ENCODE measurements at regions of chr5 and their contacts with region 1.

Region 1: GRCh38 chr5:14399054-14399692 is 182.4 kb upstream of the OTULINL start:
- DNase-seq: no peak
- H3K4me3 ChIP-seq: no peak overlapping the region
- H3K27ac ChIP-seq: no peak overlapping the region
- H3K4me1 ChIP-seq: peaks cover 2% of the 10 kb centered on the region
- H3K27me3 ChIP-seq: no peaks in the 10 kb centered on the region
- CTCF ChIP-seq: peak in 2 of 3 donors; percentile 42 to 59
- EP300 ChIP-seq: no peak
- POLR2A ChIP-seq: no peak

Region 2: DNA sequence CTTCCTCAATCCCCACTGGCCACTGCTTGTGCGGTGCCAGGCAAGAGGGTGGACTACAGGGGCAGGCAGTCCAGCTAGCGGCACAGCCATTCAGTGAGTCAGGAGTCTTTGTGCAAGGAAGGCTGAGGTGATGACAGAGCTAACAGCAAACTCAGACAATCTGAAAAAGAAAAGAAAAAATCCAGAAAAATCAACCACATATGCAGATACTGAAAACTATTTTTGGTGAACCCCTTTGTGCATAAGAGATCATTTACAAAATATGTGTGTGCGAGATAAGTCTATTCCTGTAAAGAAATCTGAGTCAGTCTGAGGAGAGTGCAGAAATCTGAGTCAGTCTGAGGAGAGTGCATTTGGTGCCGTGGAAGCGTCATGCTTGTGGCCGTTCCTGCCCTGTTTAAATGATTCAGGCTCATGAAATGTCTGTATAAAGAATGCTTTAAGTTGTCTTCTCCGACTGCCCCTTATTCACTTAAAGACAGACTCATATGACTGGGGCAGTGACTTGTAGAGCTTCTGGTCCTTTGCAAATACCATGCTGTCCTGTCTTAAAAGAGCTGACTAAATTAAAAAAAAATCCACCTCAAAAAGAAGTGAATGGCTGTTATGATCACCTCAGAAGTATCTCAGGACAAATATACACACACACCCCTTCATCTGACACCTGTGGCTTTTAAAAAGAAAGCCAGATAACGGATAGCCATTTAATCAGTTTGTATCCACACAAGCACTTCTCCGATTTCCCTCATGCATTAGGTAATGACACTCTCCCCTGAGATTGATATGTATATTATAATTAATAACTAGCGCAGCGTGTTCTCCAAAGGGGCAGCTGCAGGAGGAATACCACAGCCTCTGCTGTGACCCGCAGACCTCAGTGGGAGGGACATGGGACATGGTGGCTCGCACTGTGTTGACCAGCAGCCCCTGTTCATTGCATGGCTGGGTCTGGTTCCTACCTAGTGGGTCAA is 208.7 kb before region 1 on chr5:
- intact Hi-C with region 1: no loop called
- DNase-seq: no peak
- H3K4me3 ChIP-seq: no peak overlapping the region
- H3K27ac ChIP-seq: peak overlapping the region in 1 of 2 donors; percentile 22
- H3K4me1 ChIP-seq: peaks cover 17% of the 10 kb centered on the region
- H3K27me3 ChIP-seq: no peaks in the 10 kb centered on the region
- CTCF ChIP-seq: no peak
- EP300 ChIP-seq: no peak
- POLR2A ChIP-seq: no peak

Region 3: DNA sequence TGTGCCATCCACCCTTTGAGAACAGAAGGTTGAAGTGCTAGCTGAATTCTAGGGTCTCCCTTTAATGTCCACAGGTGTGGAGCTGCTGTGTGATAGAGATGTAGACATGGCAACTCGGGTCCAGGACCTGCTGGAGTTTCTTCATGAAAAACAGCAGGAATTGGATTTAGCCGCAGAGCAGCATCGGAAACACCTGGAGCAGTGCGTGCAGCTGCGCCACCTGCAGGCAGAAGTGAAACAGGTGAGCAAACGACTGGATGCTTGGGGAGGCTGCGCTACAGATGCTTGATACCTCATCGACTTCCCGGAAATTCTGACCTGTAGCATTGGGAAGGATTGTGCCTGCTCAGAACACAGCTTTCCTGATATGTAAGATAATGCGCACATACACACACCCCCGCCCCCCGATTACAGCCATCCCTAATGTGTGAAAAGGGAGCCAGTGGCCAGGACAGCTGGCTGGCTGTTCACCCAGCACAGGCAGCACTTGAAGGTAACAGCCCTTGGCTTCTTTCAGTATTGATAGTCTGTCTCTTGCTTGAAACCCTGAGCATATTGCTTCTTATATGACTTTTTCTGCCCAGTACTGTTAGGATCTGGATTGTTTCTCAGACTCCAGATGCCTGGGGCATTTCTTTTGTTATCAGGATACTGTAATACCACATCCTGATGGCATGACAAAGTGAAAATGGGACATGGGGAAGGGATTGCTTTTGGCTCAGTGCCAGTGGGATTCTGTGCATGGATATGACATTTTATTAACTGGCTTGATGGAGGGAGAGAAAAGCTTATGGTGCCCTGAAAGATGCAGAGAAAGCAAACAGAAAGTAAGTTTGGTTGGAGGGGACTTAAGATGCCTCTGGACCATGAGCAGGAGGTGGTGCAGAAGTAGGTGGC is 34.3 kb before region 1 on chr5:
- intact Hi-C with region 1: loop called in 1 of 4 experiments (anchors 1 kb)
- DNase-seq: no peak
- H3K4me3 ChIP-seq: no peak overlapping the region
- H3K27ac ChIP-seq: no peak overlapping the region
- H3K4me1 ChIP-seq: no peaks in the 10 kb centered on the region
- H3K27me3 ChIP-seq: no peaks in the 10 kb centered on the region
- CTCF ChIP-seq: no peak
- EP300 ChIP-seq: no peak
- POLR2A ChIP-seq: no peak

Region 4: DNA sequence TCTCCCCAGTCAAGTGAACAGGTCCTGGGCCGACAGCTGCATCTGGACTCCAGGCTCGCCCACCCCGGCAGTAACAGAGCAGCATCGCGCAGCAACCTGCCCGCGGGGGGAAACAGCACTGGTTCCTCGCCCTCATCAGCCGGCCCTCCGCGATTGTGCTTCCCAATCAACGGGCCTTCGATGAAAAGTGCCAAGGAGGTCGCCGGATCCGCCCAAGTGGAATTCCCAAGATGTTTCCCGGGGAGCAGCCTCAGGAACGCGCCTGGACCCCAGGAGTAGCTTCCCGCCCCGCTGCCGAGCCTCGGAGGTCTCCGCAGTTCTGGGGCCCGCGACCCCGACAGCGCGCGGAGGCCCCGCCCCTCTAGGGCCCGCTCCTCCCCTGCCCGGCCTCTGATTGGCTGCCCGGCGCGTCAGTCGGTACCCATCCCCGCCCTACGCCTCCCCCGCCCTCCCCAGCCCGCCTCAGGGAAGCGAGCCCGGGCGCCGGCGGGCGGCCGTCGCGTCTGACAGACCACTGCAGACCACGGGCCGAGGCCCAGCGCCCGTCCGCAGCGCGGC is 182.2 kb after region 1 on chr5 and contains the start of gene OTULINL:
- intact Hi-C with region 1: loop called in 1 of 4 experiments (anchors 5 kb)
- DNase-seq: peak; percentile 89 to 93 (median 91)
- H3K4me3 ChIP-seq: peak within 1 kb of the TSS; percentile 44
- H3K27ac ChIP-seq: peak within 1 kb of the TSS; percentile 50
- H3K4me1 ChIP-seq: no peaks in the 10 kb centered on the region
- H3K27me3 ChIP-seq: no peaks in the 10 kb centered on the region
- CTCF ChIP-seq: no peak
- EP300 ChIP-seq: no peak
- POLR2A ChIP-seq: no peak
- total RNA-seq, gene OTULINL: 3.6 to 14.9 (median 5.3) TPM

Measured in ovary (tissue), 10 donors.